Posterior vena cava (tissue), 2 donors: ENCODE measurements at regions of chr11 and their contacts with region 1.

Region 1: DNA sequence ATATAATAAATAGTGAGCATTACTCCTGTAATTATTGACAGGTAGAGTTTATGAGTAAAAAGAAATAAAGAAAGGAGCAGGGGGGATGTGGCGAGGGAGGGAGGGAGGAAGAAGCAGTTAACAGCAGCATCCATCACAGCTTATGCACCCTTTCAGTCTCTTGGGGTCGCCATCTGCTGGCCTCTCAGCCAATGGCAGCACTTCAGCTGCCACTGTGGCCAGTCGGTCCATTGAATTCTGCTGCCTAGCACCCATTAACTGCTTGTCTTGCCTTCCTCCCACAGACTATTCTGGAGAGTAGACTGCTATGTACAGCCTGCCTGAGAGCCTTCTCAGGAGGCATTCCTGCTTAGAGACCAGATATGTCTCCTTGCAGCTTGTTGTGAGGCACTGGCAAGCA is 388.3 kb downstream of the TENM4 start:
- DNase-seq: no peak

Region 2: GRCh38 chr11:77908835-77909234 is 1143.7 kb before region 1 on chr11:
- intact Hi-C with region 1: no loop called
- DNase-seq: no peak

Region 3: DNA sequence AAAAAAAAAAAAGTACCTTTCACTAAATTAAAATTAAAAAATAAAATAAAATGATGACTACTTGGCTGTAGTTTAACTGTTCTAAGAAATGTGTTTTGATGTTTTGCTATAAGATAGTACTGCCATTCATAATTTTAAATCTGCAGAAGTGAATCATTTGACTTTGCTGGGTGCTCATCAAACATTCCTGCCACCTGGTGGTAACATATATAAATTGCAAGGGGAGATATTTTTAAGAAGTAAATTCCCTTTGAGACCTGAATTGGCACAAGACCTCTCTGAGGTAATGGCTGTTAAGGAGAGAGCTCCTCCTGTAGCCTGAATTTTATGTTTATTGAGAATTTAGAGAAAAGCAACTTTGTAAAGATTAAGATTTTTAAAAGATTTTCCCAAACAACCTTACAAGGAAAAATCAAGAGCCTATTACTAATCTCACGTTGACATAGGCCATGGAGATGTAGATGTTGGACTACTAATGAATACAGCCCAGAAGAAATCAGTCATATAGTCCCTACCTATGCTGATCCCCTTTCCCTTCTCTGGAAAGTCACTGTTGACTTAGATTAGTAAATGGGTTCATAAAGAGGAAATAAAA is 466.0 kb before region 1 on chr11:
- intact Hi-C with region 1: no loop called
- DNase-seq: no peak

Region 4: DNA sequence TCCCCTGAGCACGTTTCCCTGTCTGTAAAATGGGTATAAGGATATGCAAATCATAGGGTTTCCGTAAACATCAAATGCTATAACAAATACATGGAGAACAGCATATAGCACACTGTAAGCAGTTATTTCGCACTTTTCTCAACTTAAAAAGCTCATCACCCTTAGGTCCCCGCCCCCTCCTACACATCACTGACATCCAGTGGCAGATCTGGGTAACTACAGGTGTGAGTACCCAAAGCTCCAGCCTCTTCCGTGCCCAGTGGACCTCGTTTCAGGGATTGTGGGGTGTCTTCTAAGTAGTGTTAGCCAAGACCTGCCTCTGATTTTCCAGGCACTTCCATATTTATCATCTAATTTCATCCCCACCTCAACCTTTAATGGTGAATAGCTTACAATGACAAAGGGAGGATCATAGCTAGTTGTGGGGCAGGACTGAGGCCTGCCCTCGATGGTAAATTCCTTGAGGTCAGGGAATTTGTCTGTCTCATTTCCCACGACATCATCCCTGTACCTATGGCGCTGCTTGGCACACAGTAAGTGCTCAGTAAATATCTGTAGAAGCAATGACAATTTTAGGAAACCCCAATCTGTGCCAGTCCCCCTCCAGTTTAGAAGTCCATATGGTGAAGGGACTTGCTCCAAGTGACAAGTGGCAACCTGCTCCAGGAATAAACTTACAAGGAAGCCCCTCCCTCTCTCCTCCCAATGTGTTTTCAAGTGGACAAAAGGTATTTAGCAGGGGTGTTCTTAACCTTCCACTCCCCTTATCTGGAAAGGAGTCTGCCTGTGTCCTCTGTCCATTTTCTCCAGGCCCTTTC is 47.8 kb after region 1 on chr11:
- intact Hi-C with region 1: no loop called
- DNase-seq: no peak

Region 5: GRCh38 chr11:79119491-79120284 is 67.1 kb after region 1 on chr11:
- intact Hi-C with region 1: no loop called
- DNase-seq: no peak

Region 6: DNA sequence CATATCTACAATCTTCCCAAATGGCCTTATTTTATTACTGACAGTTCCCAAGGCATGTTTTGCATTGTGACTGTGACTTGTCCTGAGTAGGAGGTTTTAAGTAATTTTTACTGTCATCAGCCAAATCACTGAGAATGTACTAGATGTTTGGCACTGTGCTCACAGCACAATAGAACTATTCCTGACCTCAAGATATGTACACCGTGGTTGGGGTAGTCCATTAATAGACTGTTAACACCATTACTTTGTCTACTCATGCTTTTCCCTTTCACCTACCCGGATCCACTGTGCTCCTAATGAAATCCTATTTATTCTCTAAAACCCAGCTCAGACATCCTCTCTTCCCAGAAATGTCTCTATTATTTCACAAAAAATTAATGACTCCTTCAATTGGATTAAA is 557.0 kb after region 1 on chr11:
- intact Hi-C with region 1: loop called in 1 of 2 experiments (anchors 5 kb)
- DNase-seq: no peak